WTC11 (cell line): ENCODE measurements at regions of chr17 and their contacts with region 1.

Region 1: GRCh38 chr17:14316150-14316785 is 15.4 kb downstream of the HS3ST3B1 start:
- DNase-seq: no peak
- ATAC-seq: no peak
- H3K4me3 Mint-ChIP-seq: no peak overlapping the region
- H3K27ac Mint-ChIP-seq: peak overlapping the region; percentile 71
- H3K4me1 Mint-ChIP-seq: peaks cover 83% of the 10 kb centered on the region
- H3K27me3 Mint-ChIP-seq: 0 out of 2 replicates have a peak, but pooled peaks cover under 1% of the 10 kb centered on the region
- CTCF ChIP-seq: no peak

Region 2: GRCh38 chr17:14245020-14245419 is 71.2 kb before region 1 on chr17:
- CTCF ChIA-PET with region 1: no interaction called
- POLR2A ChIA-PET with region 1: no interaction called
- DNase-seq: no peak
- ATAC-seq: peak; percentile 65
- H3K4me3 Mint-ChIP-seq: no peak overlapping the region
- H3K27ac Mint-ChIP-seq: no peak overlapping the region; the same call in 1 of the 2 replicates
- H3K4me1 Mint-ChIP-seq: peaks cover 6% of the 10 kb centered on the region
- H3K27me3 Mint-ChIP-seq: no peaks in the 10 kb centered on the region
- CTCF ChIP-seq: no peak

Region 3: GRCh38 chr17:14300575-14301278 is 15.5 kb before region 1 on chr17 and contains the start of gene HS3ST3B1:
- CTCF ChIA-PET with region 1: interaction called, 8 read pairs
- POLR2A ChIA-PET with region 1: interaction called, 12 read pairs
- DNase-seq: peak; percentile 100
- ATAC-seq: peak; percentile 86
- H3K4me3 Mint-ChIP-seq: peak within 1 kb of the TSS; percentile 89
- H3K27ac Mint-ChIP-seq: no peak within 1 kb of the TSS
- H3K4me1 Mint-ChIP-seq: peaks cover 65% of the 10 kb centered on the region
- H3K27me3 Mint-ChIP-seq: peaks cover 89% of the 10 kb centered on the region
- CTCF ChIP-seq: no peak
- total RNA-seq, gene HS3ST3B1: 12.3 to 22.3 TPM (median 13.1 TPM) in 3 replicates